Caco-2 (cell line): ENCODE measurements at regions of chr2 and their contacts with region 1.

Region 1: GRCh38 chr2:55961318-55961911 is 37.8 kb upstream of the EFEMP1 start:
- DNase-seq: peak in 1 of 2 experiments; percentile 42
- H3K4me3 ChIP-seq: no peak overlapping the region
- H3K4me3 Mint-ChIP-seq: no peak overlapping the region
- H3K27ac Mint-ChIP-seq: peak overlapping the region; percentile 31
- H3K4me1 ChIP-seq: peaks cover 14% of the 10 kb centered on the region
- H3K4me1 Mint-ChIP-seq: peaks cover 21% of the 10 kb centered on the region
- H3K27me3 ChIP-seq: no peaks in the 10 kb centered on the region
- H3K27me3 Mint-ChIP-seq: no peaks in the 10 kb centered on the region
- CTCF ChIP-seq: peak; percentile 66 to 83

Region 2: GRCh38 chr2:55827467-55828254 is 133.8 kb before region 1 on chr2:
- CTCF ChIA-PET with region 1: no interaction called
- POLR2A ChIA-PET with region 1: no interaction called
- intact Hi-C with region 1: no loop called
- DNase-seq: no peak
- H3K4me3 ChIP-seq: no peak overlapping the region
- H3K4me3 Mint-ChIP-seq: no peak overlapping the region
- H3K27ac Mint-ChIP-seq: no peak overlapping the region
- H3K4me1 ChIP-seq: no peaks in the 10 kb centered on the region; the same call in 1 of the 2 replicates
- H3K4me1 Mint-ChIP-seq: peaks cover 20% of the 10 kb centered on the region
- H3K27me3 ChIP-seq: no peaks in the 10 kb centered on the region
- H3K27me3 Mint-ChIP-seq: no peaks in the 10 kb centered on the region
- CTCF ChIP-seq: no peak

Region 3: DNA sequence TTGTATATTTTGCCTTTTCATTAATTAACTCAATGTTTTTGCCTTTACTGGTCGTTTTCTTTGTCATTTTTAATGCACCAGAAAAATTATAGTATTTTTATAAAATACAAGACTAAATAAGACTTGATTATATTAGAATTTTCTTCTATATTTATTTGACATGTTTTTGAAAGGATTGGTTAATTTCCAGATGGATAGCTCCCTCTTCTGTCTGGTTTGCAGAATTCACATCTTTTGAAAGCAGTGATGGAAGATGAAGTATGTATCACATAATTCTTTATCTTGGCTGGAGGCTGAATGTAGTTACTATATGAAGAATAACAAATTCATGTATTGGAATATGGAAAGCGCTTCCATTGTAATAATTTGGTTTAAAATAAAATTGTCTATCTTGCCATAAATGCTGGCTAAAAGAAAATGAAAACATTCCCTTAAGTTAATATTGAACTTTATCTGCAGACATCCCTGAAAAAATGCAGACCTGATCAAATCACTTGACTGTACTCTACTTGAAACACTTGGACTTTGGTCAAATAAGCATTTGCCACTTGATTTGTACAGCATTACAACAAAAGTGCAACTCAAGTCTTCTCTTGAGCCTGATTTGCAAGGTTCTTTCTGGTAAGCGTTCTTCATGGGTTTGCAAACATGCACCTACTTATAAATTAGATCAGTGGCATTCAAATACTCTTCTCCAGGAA is 48.5 kb after region 1 on chr2:
- CTCF ChIA-PET with region 1: no interaction called
- POLR2A ChIA-PET with region 1: no interaction called
- intact Hi-C with region 1: loop called (anchors 2 kb)
- DNase-seq: peak in 1 of 2 experiments; percentile 15
- H3K4me3 ChIP-seq: no peak overlapping the region
- H3K4me3 Mint-ChIP-seq: no peak overlapping the region
- H3K27ac Mint-ChIP-seq: no peak overlapping the region
- H3K4me1 ChIP-seq: no peaks in the 10 kb centered on the region
- H3K4me1 Mint-ChIP-seq: peaks cover 6% of the 10 kb centered on the region
- H3K27me3 ChIP-seq: no peaks in the 10 kb centered on the region
- H3K27me3 Mint-ChIP-seq: no peaks in the 10 kb centered on the region
- CTCF ChIP-seq: peak; percentile 52 to 59